ENCODE measurements at regions of chr7 and their contacts with region 1.

Region 1: GRCh38 chr7:146276888-146277287 is 160.3 kb downstream of the CNTNAP2 start:
- DNase-seq: no peak

Region 2: DNA sequence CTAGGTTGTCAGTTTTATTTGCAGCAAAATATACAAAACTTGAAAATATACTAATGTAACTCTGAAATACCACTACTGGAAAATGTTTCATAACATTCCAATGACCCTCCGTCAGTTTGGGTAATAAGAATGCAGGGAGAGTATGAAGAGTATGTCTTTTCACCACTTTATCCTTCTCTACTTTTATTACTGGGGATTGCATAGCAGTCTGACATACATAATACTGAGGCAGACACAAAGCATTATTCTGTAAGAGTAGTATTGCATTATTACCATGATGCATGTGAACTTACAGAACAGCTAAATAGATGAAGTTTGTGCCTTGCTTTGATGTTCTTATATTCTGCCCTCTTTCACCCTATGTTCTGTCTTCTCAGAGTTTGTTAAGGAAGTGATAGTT is 1289.2 kb before region 1 on chr7:
- intact Hi-C with region 1: loop called in 1 of 2 experiments (anchors 5 kb)
- DNase-seq: no peak

Region 3: DNA sequence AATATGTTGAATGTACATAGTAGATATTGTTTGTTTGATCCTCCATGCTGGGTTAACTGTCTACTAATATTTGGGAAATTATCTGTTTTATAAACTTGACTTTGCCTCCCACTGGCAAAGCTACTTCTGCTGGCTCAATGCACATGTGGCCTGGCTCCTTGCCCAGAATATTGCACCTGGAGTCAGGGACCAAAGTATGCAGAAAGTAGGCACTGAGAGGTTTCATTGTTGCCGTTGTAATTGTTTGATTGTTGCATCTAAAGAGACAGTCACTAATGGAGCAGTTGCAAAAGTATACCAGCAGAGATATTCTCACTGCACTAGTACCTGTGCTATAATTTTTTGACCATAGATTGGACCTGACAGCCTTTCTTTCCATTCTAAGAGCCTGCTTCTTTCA is 298.1 kb before region 1 on chr7:
- intact Hi-C with region 1: loop called in 1 of 2 experiments (anchors 5 kb)
- DNase-seq: no peak

Region 4: DNA sequence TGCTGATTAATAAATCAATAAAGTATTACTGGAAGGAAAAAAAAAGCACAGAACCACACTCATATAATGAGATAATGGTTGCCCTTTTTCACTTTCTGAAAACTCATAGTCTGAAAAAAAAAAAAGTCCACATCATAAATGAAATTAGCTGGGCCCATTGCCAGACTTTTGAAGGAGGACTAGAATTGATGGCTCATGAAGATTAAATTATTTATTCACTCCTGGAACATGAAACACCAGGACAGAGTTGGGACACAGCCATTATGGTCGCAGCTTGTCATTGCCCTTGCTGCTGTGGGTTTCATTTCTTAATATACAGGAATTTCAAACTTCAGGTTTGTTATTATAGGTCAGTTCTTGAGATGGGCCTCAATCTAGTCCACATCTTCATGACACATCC is 68.4 kb before region 1 on chr7:
- intact Hi-C with region 1: no loop called
- DNase-seq: no peak

Region 5: GRCh38 chr7:146235195-146235594 is 41.7 kb before region 1 on chr7:
- intact Hi-C with region 1: no loop called
- DNase-seq: no peak

Region 6: GRCh38 chr7:146255609-146256008 is 21.3 kb before region 1 on chr7:
- intact Hi-C with region 1: no loop called
- DNase-seq: no peak

Region 7: DNA sequence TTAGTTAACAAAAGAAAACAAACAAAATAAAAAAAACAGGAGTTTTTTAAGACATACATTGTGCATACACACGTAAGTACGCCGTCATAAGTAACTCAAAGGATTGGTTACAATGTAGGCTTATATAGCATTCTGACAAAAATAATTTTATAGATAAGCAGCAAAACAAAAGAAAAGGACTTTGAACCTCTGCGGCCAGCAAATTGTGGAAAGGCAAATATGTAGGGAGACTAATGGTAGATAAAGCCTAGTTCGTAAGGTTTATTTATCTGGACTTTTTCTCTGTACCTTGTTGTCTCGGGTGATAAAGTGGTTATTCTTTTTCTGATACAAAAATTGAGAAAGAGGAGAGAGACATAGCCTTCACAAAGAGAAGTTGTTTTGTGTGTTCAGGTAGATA is 731.6 kb after region 1 on chr7:
- intact Hi-C with region 1: no loop called
- DNase-seq: no peak